ENCODE measurements at regions of chr12 and their contacts with region 1.

Region 1: DNA sequence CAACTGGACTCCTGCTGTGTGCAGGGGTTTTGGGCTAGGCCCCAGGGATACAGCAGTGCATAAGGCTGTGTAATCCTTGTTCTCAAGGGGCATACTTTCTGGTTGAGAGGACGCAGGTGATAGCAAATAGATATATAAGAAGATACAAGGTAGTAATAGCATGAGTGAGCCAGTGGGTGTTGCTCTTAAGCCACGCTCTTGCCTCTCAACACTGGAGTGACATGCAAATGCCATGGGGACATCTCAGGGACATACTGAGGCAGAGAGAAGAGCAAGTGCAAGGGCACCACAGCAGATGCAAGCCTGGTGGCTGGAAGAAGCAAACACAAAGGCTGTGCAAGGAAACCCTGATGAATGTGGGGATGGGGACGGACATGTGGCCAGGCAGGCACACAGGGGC is 223.3 kb downstream of the CHST11 start:
- DNase-seq: peak; percentile 70
- H3K4me3 Mint-ChIP-seq: no peak overlapping the region
- H3K27ac Mint-ChIP-seq: peak overlapping the region; percentile 25
- H3K4me1 Mint-ChIP-seq: peaks cover 44% of the 10 kb centered on the region
- H3K27me3 Mint-ChIP-seq: no peaks in the 10 kb centered on the region

Region 2: GRCh38 chr12:104371043-104371870 is 308.8 kb before region 1 on chr12:
- CTCF ChIA-PET with region 1: no interaction called
- intact Hi-C with region 1: no loop called
- DNase-seq: no peak
- H3K4me3 Mint-ChIP-seq: no peak overlapping the region
- H3K27ac Mint-ChIP-seq: no peak overlapping the region
- H3K4me1 Mint-ChIP-seq: peaks cover 11% of the 10 kb centered on the region
- H3K27me3 Mint-ChIP-seq: no peaks in the 10 kb centered on the region

Region 3: DNA sequence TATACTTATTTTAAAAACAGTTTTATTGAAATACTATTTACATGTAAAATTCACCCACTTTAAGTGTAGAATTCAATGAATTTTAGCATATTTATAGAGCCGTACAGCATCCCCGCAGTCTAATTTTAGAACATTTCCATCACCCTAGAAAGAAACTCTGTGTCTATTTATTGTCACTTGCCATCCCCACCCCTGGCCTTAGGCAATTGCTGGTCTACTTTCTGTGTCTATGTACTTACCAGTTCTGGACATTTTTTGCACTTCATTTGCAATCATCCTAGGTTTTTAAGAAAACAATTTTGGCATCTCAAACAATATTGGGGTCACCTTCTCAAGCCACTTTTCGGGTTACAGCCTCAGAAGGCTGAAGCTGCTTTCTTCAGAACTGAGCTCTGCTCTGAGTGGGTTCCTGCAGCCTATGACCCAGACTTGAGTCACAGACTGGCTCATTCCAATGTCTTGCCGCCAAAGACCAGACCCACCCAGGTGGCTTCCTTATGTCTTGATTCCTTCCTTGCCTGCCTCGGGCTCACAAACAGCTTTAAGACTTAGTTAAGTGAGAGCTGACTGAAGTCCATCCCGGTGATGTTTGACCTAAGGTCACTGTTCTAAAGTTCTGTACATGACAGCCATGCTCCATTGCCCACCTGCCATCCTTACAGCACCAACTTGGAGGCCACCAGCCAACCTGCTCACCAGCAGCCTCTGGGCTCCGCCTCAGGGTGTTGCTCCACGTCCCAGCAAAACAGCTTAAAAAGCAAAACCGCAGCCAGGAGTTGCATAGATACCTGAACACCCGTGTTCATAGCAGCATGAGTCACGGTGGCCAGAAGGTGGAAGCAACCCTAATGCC is 91.8 kb before region 1 on chr12:
- CTCF ChIA-PET with region 1: no interaction called
- intact Hi-C with region 1: no loop called
- DNase-seq: no peak
- H3K4me3 Mint-ChIP-seq: no peak overlapping the region
- H3K27ac Mint-ChIP-seq: no peak overlapping the region
- H3K4me1 Mint-ChIP-seq: peaks cover 10% of the 10 kb centered on the region
- H3K27me3 Mint-ChIP-seq: no peaks in the 10 kb centered on the region

Region 4: GRCh38 chr12:104695453-104696148 is 15.5 kb after region 1 on chr12:
- CTCF ChIA-PET with region 1: interaction called, 5 read pairs
- intact Hi-C with region 1: loop called (anchors 1 kb)
- DNase-seq: peak; percentile 97
- H3K4me3 Mint-ChIP-seq: peak overlapping the region; percentile 37
- H3K27ac Mint-ChIP-seq: peak overlapping the region; percentile 93
- H3K4me1 Mint-ChIP-seq: peaks cover 61% of the 10 kb centered on the region
- H3K27me3 Mint-ChIP-seq: no peaks in the 10 kb centered on the region

Region 5: GRCh38 chr12:104764225-104765091 is 84.4 kb after region 1 on chr12:
- CTCF ChIA-PET with region 1: no interaction called
- intact Hi-C with region 1: loop called (anchors 2 kb)
- DNase-seq: peak; percentile 44
- H3K4me3 Mint-ChIP-seq: no peak overlapping the region
- H3K27ac Mint-ChIP-seq: no peak overlapping the region
- H3K4me1 Mint-ChIP-seq: peaks cover 23% of the 10 kb centered on the region
- H3K27me3 Mint-ChIP-seq: no peaks in the 10 kb centered on the region

Region 6: DNA sequence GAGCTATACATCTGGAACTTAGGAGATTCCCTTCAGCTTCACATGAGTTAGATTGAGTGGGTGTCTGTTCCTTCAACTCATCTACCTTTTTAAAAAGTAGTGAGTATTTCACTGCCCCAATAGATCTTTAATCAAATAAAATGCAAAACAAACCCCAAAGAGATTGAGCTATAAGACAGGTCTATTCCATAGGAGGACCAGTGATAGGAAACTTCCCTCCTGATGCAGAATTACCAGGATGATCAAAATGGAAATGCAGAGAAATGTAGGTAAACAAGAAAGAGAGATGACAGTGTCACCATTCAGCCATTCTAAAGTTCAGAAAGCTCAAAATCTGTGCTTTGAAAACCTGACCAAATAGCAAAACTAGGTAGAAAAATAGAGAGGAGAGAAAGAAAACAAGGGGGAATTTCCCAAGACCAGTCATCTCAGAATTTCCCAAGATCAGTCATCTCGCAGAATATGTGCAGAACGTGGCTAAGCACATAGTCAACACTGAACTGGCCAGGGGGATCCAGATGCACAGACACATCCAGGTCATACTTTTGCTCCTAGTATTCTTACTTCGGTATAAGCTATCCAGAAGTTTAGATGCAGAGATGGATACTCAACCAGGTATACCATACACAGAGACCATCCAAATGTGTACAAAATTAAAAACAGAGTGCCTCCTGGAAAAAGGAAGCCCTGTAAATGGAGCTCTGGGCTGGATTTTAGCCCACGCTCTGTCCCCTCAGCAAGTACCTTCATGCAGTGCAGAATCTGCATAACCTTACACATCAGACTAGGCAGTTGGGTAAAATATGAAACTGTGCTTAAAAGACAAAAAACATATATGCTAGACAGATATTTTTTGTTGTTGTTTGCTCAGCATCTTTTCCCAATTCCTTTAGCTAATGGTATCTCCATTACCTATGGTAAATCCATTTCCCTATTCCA is 250.6 kb after region 1 on chr12:
- CTCF ChIA-PET with region 1: interaction called, 3 read pairs
- intact Hi-C with region 1: loop called (anchors 1 kb)
- DNase-seq: peak; percentile 76
- H3K4me3 Mint-ChIP-seq: no peak overlapping the region
- H3K27ac Mint-ChIP-seq: peak overlapping the region; percentile 0
- H3K4me1 Mint-ChIP-seq: peaks cover 23% of the 10 kb centered on the region
- H3K27me3 Mint-ChIP-seq: no peaks in the 10 kb centered on the region

Region 7: GRCh38 chr12:105107494-105108371 is 427.7 kb after region 1 on chr12 and contains the start of gene WASHC4:
- CTCF ChIA-PET with region 1: no interaction called
- intact Hi-C with region 1: loop called (anchors 1 kb)
- DNase-seq: peak; percentile 95
- H3K4me3 Mint-ChIP-seq: peak within 1 kb of the TSS; percentile 90
- H3K27ac Mint-ChIP-seq: peak within 1 kb of the TSS; percentile 91
- H3K4me1 Mint-ChIP-seq: peaks cover 35% of the 10 kb centered on the region
- H3K27me3 Mint-ChIP-seq: peaks cover 13% of the 10 kb centered on the region
- total RNA-seq, gene WASHC4: 23.7 to 26.0 TPM

Measured in activated naive CD4-positive, alpha-beta T cell treated with anti-CD3 and anti-CD28 coated beads for 36 hours (primary cell).